ENCODE measurements at regions of chr13 and their contacts with region 1.

Region 1: GRCh38 chr13:44435142-44435982 is 61.7 kb downstream of the SERP2 start:
- DNase-seq: peak; percentile 97
- H3K4me3 ChIP-seq: peak overlapping the region; percentile 71 to 91 (median 88)
- H3K27ac ChIP-seq: peak overlapping the region; percentile 97
- H3K4me1 ChIP-seq: peaks cover 19% of the 10 kb centered on the region
- H3K27me3 ChIP-seq: no peaks in the 10 kb centered on the region
- CTCF ChIP-seq: no peak

Region 2: DNA sequence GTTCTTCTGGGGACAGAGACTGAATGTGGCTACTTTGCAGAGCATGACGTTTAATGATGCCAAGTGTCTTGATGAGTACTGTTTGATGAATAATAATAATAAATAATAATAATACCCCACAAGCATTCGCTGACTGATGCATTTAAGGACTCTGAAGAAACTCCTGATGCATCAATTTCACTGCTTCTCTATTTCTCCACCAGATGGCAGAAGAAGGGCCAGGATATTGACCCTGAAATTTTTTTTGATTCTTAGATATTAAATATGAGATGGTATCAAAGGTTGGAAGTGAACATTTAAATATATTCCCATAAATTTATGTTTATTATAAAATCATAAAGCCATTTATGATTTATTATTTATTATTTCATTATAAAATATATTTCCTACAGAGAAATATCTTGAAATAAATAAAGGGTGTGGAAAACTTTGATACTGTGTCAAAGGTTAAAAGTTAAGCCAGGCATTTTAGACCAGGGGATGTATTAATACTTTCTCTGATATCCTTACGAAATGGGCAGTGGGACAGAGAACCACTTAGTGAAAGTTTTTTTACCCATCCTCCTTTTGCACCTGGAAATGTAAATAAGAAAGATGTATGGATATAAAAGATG is 384.8 kb before region 1 on chr13:
- CTCF ChIA-PET with region 1: no interaction called
- dilution Hi-C with region 1: no loop called
- in situ Hi-C with region 1: loop called (anchors 5 kb)
- intact Hi-C with region 1: loop called (anchors 1 kb)
- DNase-seq: peak; percentile 20
- H3K4me3 ChIP-seq: no peak overlapping the region
- H3K27ac ChIP-seq: no peak overlapping the region
- H3K4me1 ChIP-seq: peaks cover 5% of the 10 kb centered on the region
- H3K27me3 ChIP-seq: no peaks in the 10 kb centered on the region
- CTCF ChIP-seq: peak; percentile 66 to 77

Region 3: DNA sequence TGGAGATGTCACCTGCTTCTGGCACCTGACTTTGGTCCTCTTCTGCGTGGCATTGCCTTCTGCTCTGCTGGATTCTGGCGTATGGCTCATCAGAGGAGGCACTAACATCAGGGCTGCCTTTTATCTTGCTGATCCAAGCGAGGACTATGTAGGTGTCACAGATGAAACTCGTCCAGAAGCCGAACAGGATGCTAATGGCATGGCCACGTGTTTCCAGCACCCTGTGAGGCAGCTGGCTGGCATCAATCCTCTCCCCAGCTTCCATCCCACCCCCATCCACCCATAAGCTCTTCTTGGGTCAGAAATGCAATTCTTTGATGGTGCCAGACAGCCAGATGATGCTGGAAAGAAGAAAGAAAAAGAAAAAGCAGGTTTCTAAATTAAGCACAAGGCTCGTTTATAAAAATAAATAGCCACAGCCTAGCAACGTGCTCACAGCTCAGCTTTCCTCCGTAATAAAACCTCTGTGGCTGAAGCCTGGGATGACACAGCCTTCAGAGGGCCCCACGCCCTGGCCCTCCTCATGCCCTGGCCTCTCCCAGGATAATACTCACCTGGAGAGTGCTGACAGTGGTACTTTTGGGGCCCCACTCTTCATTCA is 274.7 kb before region 1 on chr13:
- CTCF ChIA-PET with region 1: no interaction called
- dilution Hi-C with region 1: no loop called
- in situ Hi-C with region 1: no loop called
- intact Hi-C with region 1: loop called (anchors 1 kb)
- DNase-seq: peak; percentile 72
- H3K4me3 ChIP-seq: no peak overlapping the region
- H3K27ac ChIP-seq: peak overlapping the region; percentile 95
- H3K4me1 ChIP-seq: peaks cover 33% of the 10 kb centered on the region
- H3K27me3 ChIP-seq: no peaks in the 10 kb centered on the region
- CTCF ChIP-seq: no peak

Region 4: DNA sequence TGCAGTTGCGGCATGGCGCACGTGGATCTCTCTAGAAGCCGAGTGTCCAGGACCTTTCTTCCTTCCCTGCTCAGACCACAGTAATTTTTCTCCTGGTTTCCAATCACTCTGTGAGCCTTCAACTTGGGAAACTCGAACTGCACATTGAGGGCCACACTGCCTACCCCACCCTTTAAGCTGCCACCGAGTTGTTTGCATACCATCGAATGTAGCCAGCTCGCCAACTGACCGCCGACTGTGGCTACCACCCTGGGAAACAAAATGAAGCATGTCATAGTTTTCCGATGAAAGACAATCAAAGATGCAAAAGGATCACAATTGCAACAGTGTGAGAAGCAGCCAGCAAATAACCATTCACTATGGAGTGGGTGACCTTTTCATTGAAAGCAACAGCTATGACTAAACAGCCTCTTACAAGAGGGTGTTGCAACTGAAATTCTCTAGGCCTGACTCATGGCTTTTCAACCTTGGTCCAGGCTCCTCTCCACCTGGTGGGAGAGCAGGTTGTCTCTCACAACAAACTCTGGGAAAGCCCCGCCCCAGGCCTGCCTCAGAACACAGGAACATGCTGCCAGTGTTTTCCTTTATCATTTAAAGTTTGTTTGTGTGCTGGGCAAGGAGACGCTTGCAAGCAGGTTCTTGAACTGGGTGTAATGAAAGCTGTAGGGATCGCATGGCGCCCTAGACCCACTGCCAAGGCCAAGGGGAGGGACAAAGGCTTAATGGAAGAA is 203.4 kb before region 1 on chr13:
- CTCF ChIA-PET with region 1: no interaction called
- dilution Hi-C with region 1: no loop called
- in situ Hi-C with region 1: no loop called
- intact Hi-C with region 1: loop called (anchors 1 kb)
- DNase-seq: peak; percentile 98
- H3K4me3 ChIP-seq: no peak overlapping the region
- H3K27ac ChIP-seq: peak overlapping the region; percentile 70
- H3K4me1 ChIP-seq: peaks cover 17% of the 10 kb centered on the region
- H3K27me3 ChIP-seq: no peaks in the 10 kb centered on the region
- CTCF ChIP-seq: peak in 1 of 2 donors; percentile 53

Region 5: GRCh38 chr13:44470638-44471562 is 35.5 kb after region 1 on chr13:
- CTCF ChIA-PET with region 1: no interaction called
- dilution Hi-C with region 1: no loop called
- in situ Hi-C with region 1: no loop called
- intact Hi-C with region 1: loop called (anchors 1 kb)
- DNase-seq: no peak
- H3K4me3 ChIP-seq: no peak overlapping the region
- H3K27ac ChIP-seq: no peak overlapping the region
- H3K4me1 ChIP-seq: peaks cover 3% of the 10 kb centered on the region
- H3K27me3 ChIP-seq: no peaks in the 10 kb centered on the region
- CTCF ChIP-seq: peak; percentile 51 to 52

Region 6: GRCh38 chr13:44484562-44485138 is 49.3 kb after region 1 on chr13:
- CTCF ChIA-PET with region 1: no interaction called
- dilution Hi-C with region 1: no loop called
- in situ Hi-C with region 1: no loop called
- intact Hi-C with region 1: no loop called
- DNase-seq: no peak
- H3K4me3 ChIP-seq: no peak overlapping the region
- H3K27ac ChIP-seq: no peak overlapping the region
- H3K4me1 ChIP-seq: no peaks in the 10 kb centered on the region
- H3K27me3 ChIP-seq: no peaks in the 10 kb centered on the region
- CTCF ChIP-seq: no peak

Region 7: GRCh38 chr13:44637581-44637980 is 202.2 kb after region 1 on chr13:
- CTCF ChIA-PET with region 1: no interaction called
- dilution Hi-C with region 1: no loop called
- in situ Hi-C with region 1: no loop called
- intact Hi-C with region 1: no loop called
- DNase-seq: no peak
- H3K4me3 ChIP-seq: no peak overlapping the region
- H3K27ac ChIP-seq: no peak overlapping the region
- H3K4me1 ChIP-seq: no peaks in the 10 kb centered on the region
- H3K27me3 ChIP-seq: no peaks in the 10 kb centered on the region
- CTCF ChIP-seq: no peak

Region 8: DNA sequence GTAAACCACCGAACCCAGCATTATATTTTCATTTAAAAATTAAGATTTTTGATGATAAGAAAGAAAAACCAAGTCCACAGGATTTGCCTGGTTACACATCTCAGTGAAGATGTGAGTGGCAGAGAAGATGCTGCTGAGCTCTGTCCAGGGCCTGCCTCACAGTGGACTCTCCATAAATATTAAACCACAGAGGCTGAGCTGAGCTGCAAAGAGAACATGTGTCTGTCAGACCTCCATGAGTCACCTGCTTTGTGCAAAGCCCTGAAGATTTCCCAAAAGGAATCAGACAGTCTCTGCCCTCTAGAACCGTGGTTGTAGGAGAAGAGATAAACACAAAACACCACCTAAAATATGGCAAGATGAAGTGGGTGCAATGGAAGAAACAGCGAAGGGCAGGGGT is 268.0 kb after region 1 on chr13:
- CTCF ChIA-PET with region 1: no interaction called
- dilution Hi-C with region 1: no loop called
- in situ Hi-C with region 1: no loop called
- intact Hi-C with region 1: no loop called
- DNase-seq: peak; percentile 64
- H3K4me3 ChIP-seq: no peak overlapping the region
- H3K27ac ChIP-seq: no peak overlapping the region
- H3K4me1 ChIP-seq: peaks cover 7% of the 10 kb centered on the region
- H3K27me3 ChIP-seq: no peaks in the 10 kb centered on the region
- CTCF ChIP-seq: no peak

Measured in mammary epithelial cell (primary cell).